ENCODE measurements at regions of chr5 and their contacts with region 1.

Region 1: GRCh38 chr5:68252673-68253623 is 37.4 kb downstream of the PIK3R1 start:
- DNase-seq: peak; percentile 67
- ATAC-seq: peak; percentile 84
- H3K4me3 Mint-ChIP-seq: no peak overlapping the region
- H3K27ac Mint-ChIP-seq: no peak overlapping the region
- H3K4me1 Mint-ChIP-seq: peaks cover 45% of the 10 kb centered on the region
- H3K27me3 Mint-ChIP-seq: no peaks in the 10 kb centered on the region
- CTCF ChIP-seq: peak; percentile 26; the same call in 1 of the 2 replicates

Region 2: GRCh38 chr5:67246108-67246507 is 1006.8 kb before region 1 on chr5:
- CTCF ChIA-PET with region 1: interaction called, 31 read pairs
- POLR2A ChIA-PET with region 1: no interaction called
- DNase-seq: no peak
- ATAC-seq: no peak
- H3K4me3 Mint-ChIP-seq: no peak overlapping the region
- H3K27ac Mint-ChIP-seq: no peak overlapping the region
- H3K4me1 Mint-ChIP-seq: peaks cover 9% of the 10 kb centered on the region
- H3K27me3 Mint-ChIP-seq: no peaks in the 10 kb centered on the region
- CTCF ChIP-seq: peak; percentile 56

Measured in WTC11 (cell line).